ENCODE measurements at regions of chrX and their contacts with region 1.

Region 1: GRCh38 chrX:48648336-48648751 is 35.3 kb upstream of the WAS start:
- DNase-seq: peak; percentile 38 to 51 (median 47)
- H3K4me3 ChIP-seq: no peak overlapping the region
- H3K4me3 Mint-ChIP-seq: no peak overlapping the region
- H3K27ac ChIP-seq: no peak overlapping the region
- H3K27ac Mint-ChIP-seq: peak overlapping the region in 2 of 7 donors; percentile 54 to 73
- H3K4me1 ChIP-seq: no peaks in the 10 kb centered on the region
- H3K4me1 Mint-ChIP-seq: peaks cover 2% of the 10 kb centered on the region
- H3K27me3 ChIP-seq: no peaks in the 10 kb centered on the region
- H3K27me3 Mint-ChIP-seq: peaks cover 0 to 3% (median 2%) of the 10 kb centered on the region in 3 donors
- CTCF ChIP-seq: peak; percentile 56

Region 2: DNA sequence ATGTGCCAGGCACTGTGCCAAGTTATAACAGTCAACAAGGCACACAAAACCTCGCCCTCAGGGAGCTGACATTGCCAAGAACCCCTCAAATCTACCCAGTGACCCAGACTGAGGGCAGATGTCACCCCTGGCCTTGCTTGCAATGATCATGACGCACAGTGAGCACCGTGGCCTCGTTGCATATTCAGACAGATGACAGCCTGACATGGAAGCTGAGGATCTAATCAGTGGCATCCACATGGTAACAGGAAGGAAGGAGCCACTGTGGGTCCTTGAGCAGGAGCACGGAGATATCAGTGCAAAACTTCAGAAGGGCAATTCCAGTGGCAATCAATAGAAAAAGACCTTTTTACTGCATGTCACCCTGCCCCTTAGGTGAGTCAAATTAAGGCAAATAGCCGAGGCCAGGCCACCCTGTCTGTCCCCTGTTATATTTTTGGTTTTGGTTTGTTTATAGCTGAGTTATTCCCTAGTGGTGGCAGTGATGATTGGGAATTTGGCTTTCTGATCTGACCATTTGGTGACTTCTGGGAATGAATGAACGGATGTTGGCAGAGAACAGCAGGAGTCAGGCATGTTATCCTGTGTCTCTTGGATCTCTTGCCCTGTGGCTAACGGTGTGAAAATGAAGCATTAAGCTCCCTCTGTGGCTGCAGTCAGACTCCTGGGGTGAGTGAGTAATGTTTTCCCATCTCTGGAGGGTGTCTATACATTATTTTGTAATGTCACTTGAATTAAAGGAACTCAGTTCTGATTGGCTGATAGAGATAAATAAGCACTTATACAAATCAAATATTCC is 30.6 kb before region 1 on chrX:
- intact Hi-C with region 1: no loop called
- DNase-seq: no peak
- H3K4me3 ChIP-seq: no peak overlapping the region
- H3K4me3 Mint-ChIP-seq: no peak overlapping the region
- H3K27ac ChIP-seq: no peak overlapping the region
- H3K27ac Mint-ChIP-seq: peak overlapping the region in 3 of 7 donors; percentile 7 to 59 (median 29)
- H3K4me1 ChIP-seq: peaks cover 23 to 26% of the 10 kb centered on the region in 2 donors
- H3K4me1 Mint-ChIP-seq: peaks cover 34% of the 10 kb centered on the region
- H3K27me3 ChIP-seq: no peaks in the 10 kb centered on the region
- H3K27me3 Mint-ChIP-seq: peaks cover 0 to 8% (median 0%) of the 10 kb centered on the region in 3 donors
- CTCF ChIP-seq: no peak

Region 3: DNA sequence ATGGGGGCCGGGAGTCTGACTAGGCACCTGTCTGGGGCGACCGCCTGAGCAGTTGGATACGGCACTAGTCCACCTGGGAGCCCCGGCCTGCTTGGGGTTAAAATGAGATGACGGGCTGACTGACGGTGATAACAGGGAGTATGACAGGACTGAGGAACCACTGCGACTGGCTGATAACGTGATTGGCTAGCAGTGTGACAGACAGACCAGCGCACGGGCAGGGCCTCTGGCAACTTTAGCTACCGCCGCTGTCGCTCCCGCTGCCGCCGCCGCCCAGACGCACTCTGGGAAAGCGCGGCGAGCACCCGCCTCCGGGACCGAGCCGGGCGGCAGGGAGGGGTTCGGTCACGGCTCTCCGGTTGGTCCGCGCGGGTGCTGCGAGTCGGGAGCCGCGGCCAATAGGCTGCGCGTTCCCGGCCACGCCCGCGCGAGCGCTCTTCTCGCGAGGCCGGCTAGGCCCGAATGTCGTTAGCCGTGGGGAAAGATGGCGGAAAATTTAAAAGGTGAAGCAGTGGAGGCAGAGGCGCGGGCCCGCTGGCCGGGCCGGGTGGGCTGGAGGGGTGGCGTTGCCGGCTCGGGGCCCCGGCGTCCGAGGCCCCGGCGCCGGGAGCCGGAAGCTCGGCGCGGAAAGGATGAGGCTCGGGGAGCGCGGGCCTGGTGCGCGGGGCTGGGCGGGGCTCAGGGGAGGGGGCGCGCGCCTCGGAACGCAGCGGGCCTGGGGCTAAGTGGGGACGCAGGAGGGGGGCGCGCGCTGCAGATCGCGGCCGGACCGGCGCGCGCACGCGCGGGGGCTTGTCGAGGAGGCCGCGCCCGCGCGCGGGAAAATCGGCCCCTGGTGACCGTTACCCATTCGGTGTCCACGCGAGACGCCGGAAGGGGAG is 48.2 kb after region 1 on chrX and contains the start of gene SUV39H1:
- intact Hi-C with region 1: loop called (anchors 10 kb)
- DNase-seq: peak; percentile 85 to 88 (median 88)
- H3K4me3 ChIP-seq: peak within 1 kb of the TSS; percentile 48 to 76 (median 63)
- H3K4me3 Mint-ChIP-seq: peak within 1 kb of the TSS; percentile 82 to 94
- H3K27ac ChIP-seq: peak within 1 kb of the TSS; percentile 95 to 96
- H3K27ac Mint-ChIP-seq: peak within 1 kb of the TSS; percentile 95 to 100 (median 97)
- H3K4me1 ChIP-seq: peaks cover 34 to 37% of the 10 kb centered on the region in 2 donors
- H3K4me1 Mint-ChIP-seq: peaks cover 45% of the 10 kb centered on the region
- H3K27me3 ChIP-seq: no peaks in the 10 kb centered on the region
- H3K27me3 Mint-ChIP-seq: peaks cover 0 to 6% (median 1%) of the 10 kb centered on the region in 3 donors
- CTCF ChIP-seq: no peak
- polyA plus RNA-seq, gene SUV39H1: 2.8 to 3.4 (median 2.9) TPM

Region 4: DNA sequence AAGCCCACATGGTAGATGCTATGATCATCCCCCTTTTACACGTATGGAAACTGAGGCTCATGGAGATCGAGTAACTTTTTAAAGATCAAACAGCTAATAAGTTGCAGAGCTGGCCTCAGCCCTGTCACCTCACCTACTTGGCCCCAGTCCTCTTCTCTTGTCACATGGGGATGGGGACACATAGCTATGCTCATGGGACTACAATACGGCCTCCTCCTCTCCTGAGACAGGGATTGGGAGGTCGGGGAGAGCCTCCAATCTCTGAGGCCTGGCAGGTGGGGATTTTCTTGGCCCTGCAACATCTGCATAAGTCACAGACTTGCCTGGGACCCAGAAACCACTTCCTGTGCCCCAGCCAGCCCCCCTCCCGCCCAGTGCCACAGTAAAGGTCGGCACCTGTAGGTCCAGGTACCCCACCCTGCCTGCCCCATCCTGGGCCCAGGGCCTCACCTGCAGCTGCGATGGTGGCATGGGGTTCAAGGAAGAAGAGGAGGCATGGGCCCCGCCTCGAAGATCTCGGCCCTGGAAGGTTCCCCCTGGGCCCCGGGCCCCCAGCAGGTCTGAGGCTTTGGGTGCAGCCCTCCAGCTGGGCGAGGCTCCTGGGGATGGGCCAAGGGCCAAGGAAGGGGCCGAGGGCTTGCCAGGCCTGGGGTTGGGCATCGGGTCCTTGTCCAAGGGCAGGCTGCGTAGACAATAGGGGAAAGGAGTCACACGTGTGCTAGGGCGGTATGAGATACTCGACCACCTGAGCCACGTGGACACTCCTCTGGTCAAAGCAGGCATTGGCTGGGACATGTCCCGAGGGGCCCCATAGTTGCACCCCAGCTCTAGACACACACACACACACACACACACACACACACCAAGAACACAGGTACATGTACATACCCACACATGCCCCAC is 609.8 kb after region 1 on chrX:
- intact Hi-C with region 1: no loop called
- DNase-seq: no peak
- H3K4me3 ChIP-seq: no peak overlapping the region
- H3K4me3 Mint-ChIP-seq: no peak overlapping the region
- H3K27ac ChIP-seq: no peak overlapping the region
- H3K27ac Mint-ChIP-seq: no peak overlapping the region
- H3K4me1 ChIP-seq: peaks cover 9% of the 10 kb centered on the region in 2 donors
- H3K4me1 Mint-ChIP-seq: peaks cover 11% of the 10 kb centered on the region
- H3K27me3 ChIP-seq: no peaks in the 10 kb centered on the region
- H3K27me3 Mint-ChIP-seq: peaks cover 2 to 12% (median 3%) of the 10 kb centered on the region in 3 donors
- CTCF ChIP-seq: no peak